ENCODE measurements at regions of chr11 and their contacts with region 1.

Region 1: GRCh38 chr11:24588075-24588474 is 91.2 kb downstream of the LUZP2 start:
- DNase-seq: peak; percentile 71
- ATAC-seq: peak; percentile 60
- H3K4me3 ChIP-seq: 0 out of 2 replicates have a peak overlapping the region, but pooled peaks have one; percentile 10
- H3K27ac ChIP-seq: peak overlapping the region; percentile 39; the same call in 1 of the 2 replicates
- H3K4me1 ChIP-seq: peaks cover 38% of the 10 kb centered on the region
- H3K27me3 ChIP-seq: no peaks in the 10 kb centered on the region
- CTCF ChIP-seq: no peak

Region 2: DNA sequence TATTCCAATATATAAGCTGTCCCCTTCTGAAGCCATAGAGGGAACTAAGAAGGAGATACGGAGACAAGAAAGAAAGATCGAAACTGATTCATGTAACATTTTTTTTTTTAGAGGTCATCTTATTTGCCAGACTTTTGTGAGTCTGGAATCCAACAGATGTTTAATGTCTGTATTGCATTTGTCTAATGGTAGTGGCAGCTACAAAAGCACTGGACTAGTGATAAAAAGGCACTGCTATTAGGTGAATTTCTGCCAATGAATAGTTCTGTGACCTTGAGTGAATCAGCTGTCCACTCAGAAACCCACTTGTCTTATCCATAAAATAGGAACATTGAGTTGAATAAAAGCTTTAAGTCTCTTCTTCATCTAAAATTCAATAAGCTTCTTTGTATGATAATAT is 117.0 kb before region 1 on chr11:
- CTCF ChIA-PET with region 1: no interaction called
- POLR2A ChIA-PET with region 1: no interaction called
- intact Hi-C with region 1: no loop called
- DNase-seq: no peak
- ATAC-seq: no peak
- H3K4me3 ChIP-seq: no peak overlapping the region
- H3K27ac ChIP-seq: no peak overlapping the region
- H3K4me1 ChIP-seq: no peaks in the 10 kb centered on the region
- H3K27me3 ChIP-seq: no peaks in the 10 kb centered on the region
- CTCF ChIP-seq: no peak

Region 3: GRCh38 chr11:24531528-24531927 is 56.5 kb before region 1 on chr11:
- CTCF ChIA-PET with region 1: no interaction called
- POLR2A ChIA-PET with region 1: no interaction called
- intact Hi-C with region 1: no loop called
- DNase-seq: no peak
- ATAC-seq: no peak
- H3K4me3 ChIP-seq: no peak overlapping the region
- H3K27ac ChIP-seq: no peak overlapping the region
- H3K4me1 ChIP-seq: no peaks in the 10 kb centered on the region
- H3K27me3 ChIP-seq: no peaks in the 10 kb centered on the region
- CTCF ChIP-seq: no peak

Region 4: DNA sequence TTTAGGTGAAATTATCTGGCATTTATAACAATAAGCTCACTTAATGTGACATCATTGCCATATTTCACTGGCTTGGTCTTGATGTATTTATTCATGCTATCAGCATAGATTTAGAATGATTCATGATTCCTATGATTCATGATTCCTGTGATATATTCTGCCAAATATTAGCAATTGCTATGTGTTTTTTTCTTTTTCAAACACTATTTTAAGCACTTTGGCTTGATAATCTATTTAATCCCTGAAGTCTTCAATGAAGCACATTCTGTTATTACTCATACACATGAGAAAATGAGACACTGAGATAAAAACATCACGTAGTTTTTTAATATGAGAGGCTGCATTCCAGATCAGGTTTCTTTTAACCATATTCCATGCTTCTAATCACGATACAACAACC is 12.7 kb before region 1 on chr11:
- CTCF ChIA-PET with region 1: no interaction called
- POLR2A ChIA-PET with region 1: interaction called, 4 read pairs
- intact Hi-C with region 1: loop called (anchors 1 kb)
- DNase-seq: peak; percentile 78
- ATAC-seq: peak; percentile 84
- H3K4me3 ChIP-seq: no peak overlapping the region
- H3K27ac ChIP-seq: peak overlapping the region; percentile 70
- H3K4me1 ChIP-seq: peaks cover 22% of the 10 kb centered on the region
- H3K27me3 ChIP-seq: no peaks in the 10 kb centered on the region
- CTCF ChIP-seq: no peak

Region 5: DNA sequence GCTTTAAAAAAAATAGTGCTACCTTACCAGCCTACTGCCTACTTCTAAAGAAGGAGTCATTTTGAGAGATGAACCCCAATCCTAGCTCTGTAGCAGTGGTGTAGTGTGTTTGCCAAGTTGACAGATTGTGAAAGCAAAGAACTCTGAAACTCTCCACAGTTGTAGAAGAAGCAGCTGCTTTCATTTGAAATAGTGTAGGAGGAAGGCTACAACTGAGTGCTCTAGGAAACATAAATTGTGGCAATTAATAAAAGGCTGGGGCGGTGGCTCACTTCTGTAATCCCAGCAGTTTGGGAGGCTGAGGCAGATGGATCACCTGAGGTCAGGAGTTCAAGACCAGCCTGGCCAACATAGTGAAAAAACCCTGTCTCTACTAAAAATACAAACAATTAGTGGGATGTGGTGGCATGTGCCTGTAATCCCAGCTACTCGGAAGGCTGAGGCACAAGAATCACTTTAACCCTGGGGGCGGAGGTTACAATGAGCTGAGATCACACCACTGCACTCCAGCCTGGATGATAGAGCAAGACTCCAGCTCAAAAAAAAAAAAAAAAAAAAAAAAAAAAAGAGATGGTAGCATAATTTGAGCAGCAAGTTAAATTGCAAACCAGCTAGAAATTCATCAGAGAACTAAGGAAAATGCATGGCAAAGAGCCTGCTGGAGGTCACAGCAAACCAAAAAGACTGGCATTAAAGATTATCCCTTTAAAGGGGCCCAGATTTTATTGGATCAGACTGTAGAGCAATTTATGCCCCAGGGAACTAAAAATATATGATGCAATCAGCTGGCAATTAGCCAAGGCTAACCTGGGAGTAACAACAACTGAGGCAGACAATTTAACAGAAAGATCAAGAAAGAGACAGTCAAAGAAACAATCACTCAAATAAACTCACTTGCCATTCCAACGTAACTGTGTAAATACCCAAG is 21.4 kb after region 1 on chr11:
- CTCF ChIA-PET with region 1: no interaction called
- POLR2A ChIA-PET with region 1: no interaction called
- intact Hi-C with region 1: no loop called
- DNase-seq: no peak
- ATAC-seq: no peak
- H3K4me3 ChIP-seq: no peak overlapping the region
- H3K27ac ChIP-seq: no peak overlapping the region
- H3K4me1 ChIP-seq: no peaks in the 10 kb centered on the region
- H3K27me3 ChIP-seq: no peaks in the 10 kb centered on the region
- CTCF ChIP-seq: no peak

Region 6: GRCh38 chr11:24779791-24780190 is 191.7 kb after region 1 on chr11:
- CTCF ChIA-PET with region 1: no interaction called
- POLR2A ChIA-PET with region 1: no interaction called
- intact Hi-C with region 1: no loop called
- DNase-seq: peak; percentile 54
- ATAC-seq: peak; percentile 58; the same call in 1 of the 2 replicates
- H3K4me3 ChIP-seq: no peak overlapping the region
- H3K27ac ChIP-seq: no peak overlapping the region
- H3K4me1 ChIP-seq: no peaks in the 10 kb centered on the region
- H3K27me3 ChIP-seq: no peaks in the 10 kb centered on the region
- CTCF ChIP-seq: peak; percentile 58